ENCODE measurements at regions of chrX and their contacts with region 1.

Region 1: DNA sequence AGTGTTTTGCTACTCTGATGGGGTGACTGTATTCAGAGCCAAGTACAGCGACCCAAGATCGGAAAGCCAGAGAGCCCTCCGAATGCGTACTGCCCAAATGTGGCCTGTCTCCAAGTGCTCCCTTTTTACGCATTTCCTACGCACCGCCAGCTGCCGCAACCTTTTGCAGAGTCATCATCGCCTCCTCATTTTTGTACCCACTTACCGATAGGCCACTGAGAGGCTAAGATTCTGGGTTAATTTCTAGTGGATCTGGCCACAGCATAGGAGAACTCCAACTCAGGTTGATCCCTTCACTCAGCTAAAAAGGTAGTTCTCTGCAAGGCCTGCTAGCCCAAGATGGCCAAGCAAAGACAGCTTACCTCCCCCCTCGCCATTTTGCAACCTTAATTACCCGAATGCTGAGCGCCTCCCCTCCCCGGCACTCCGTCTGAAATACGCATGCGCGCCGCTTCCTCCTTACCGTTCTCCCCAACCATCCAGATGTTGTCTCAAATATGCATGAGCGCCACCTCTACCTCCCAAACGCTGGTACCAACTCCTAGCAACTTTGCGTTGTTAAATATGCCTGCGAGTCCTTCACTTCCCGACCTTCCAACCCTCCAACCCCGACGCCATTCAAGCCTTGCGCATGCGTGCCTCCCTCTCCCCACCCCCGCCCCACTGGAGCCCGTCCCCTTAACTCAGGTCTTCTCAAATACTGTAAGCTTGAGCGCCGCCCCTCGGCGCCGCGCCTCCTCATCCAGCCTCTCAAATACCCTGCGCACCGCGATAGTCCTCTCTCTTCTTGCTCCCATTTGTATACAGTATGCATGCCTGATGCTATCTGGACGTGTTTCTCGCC is 11.8 kb upstream of the ZCCHC13 start:
- H3K4me3 Mint-ChIP-seq: peak overlapping the region; percentile 99
- H3K27ac Mint-ChIP-seq: peak overlapping the region; percentile 95
- H3K4me1 Mint-ChIP-seq: peaks cover 20% of the 10 kb centered on the region
- H3K27me3 Mint-ChIP-seq: no peaks in the 10 kb centered on the region

Region 2: GRCh38 chrX:74343343-74344279 is 51.4 kb after region 1 on chrX:
- intact Hi-C with region 1: loop called (anchors 1 kb)
- H3K4me3 Mint-ChIP-seq: peak overlapping the region; percentile 32
- H3K27ac Mint-ChIP-seq: peak overlapping the region; percentile 85
- H3K4me1 Mint-ChIP-seq: peaks cover 15% of the 10 kb centered on the region
- H3K27me3 Mint-ChIP-seq: no peaks in the 10 kb centered on the region

Region 3: GRCh38 chrX:74382613-74383012 is 90.4 kb after region 1 on chrX:
- intact Hi-C with region 1: loop called (anchors 2 kb)
- H3K4me3 Mint-ChIP-seq: peak overlapping the region; percentile 60
- H3K27ac Mint-ChIP-seq: peak overlapping the region; percentile 87
- H3K4me1 Mint-ChIP-seq: peaks cover 12% of the 10 kb centered on the region
- H3K27me3 Mint-ChIP-seq: peaks cover 2% of the 10 kb centered on the region

Region 4: GRCh38 chrX:74614093-74614909 is 322.1 kb after region 1 on chrX and contains the start of gene RLIM:
- intact Hi-C with region 1: loop called (anchors 5 kb)
- H3K4me3 Mint-ChIP-seq: peak within 1 kb of the TSS; percentile 100
- H3K27ac Mint-ChIP-seq: peak within 1 kb of the TSS; percentile 100
- H3K4me1 Mint-ChIP-seq: no peaks in the 10 kb centered on the region
- H3K27me3 Mint-ChIP-seq: no peaks in the 10 kb centered on the region

Measured in dendritic cell treated with granulocyte-macrophage colony-stimulating factor and Interleukin-4, amounts not matched to agents 40 ng/mL and 50 ng/mL, for 4 days (primary cell).